ENCODE measurements at regions of chr14 and their contacts with region 1.

Region 1: DNA sequence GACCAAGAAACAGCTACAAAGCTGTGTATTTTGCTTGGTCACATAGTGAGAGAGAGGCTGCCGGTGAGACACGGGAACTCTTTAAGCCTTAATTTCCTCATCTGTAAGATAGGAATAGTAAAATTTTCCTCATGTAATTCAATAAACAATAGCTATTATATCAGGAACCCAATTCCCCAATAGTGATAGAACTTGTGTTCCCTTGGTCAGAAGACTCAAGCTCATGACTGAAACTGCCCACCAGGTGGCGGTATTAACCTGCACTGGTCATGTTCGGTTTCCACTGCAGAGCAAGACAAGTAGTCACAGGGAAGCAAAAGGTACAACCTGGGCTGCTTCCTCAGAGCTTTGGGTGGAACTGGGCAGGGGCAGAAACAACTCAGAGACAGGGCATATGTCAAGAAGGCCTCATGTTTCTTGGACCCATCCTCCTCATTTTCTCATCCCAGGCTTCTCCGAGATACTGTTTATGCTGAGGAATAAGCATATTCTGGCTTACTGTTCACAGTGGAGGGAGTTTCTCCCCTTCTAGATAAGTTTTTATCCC is 4.2 kb upstream of the AJUBA start:
- DNase-seq: peak; percentile 87
- H3K4me3 Mint-ChIP-seq: no peak overlapping the region
- H3K27ac Mint-ChIP-seq: no peak overlapping the region
- H3K4me1 Mint-ChIP-seq: peaks cover 6% of the 10 kb centered on the region
- H3K27me3 Mint-ChIP-seq: no peaks in the 10 kb centered on the region
- CTCF ChIP-seq: peak; percentile 75

Region 2: GRCh38 chr14:22200977-22201605 is 785.5 kb before region 1 on chr14:
- CTCF ChIA-PET with region 1: no interaction called
- POLR2A ChIA-PET with region 1: no interaction called
- intact Hi-C with region 1: no loop called
- DNase-seq: peak; percentile 57
- H3K4me3 Mint-ChIP-seq: no peak overlapping the region
- H3K27ac Mint-ChIP-seq: no peak overlapping the region
- H3K4me1 Mint-ChIP-seq: peaks cover 6% of the 10 kb centered on the region
- H3K27me3 Mint-ChIP-seq: peaks cover 12% of the 10 kb centered on the region
- CTCF ChIP-seq: peak; percentile 64

Region 3: GRCh38 chr14:22556990-22557623 is 429.5 kb before region 1 on chr14:
- CTCF ChIA-PET with region 1: interaction called, 6 read pairs
- POLR2A ChIA-PET with region 1: interaction called, 3 read pairs
- intact Hi-C with region 1: loop called (anchors 2 kb)
- DNase-seq: peak; percentile 78
- H3K4me3 Mint-ChIP-seq: peak overlapping the region; percentile 62
- H3K27ac Mint-ChIP-seq: peak overlapping the region; percentile 46
- H3K4me1 Mint-ChIP-seq: peaks cover 22% of the 10 kb centered on the region
- H3K27me3 Mint-ChIP-seq: no peaks in the 10 kb centered on the region
- CTCF ChIP-seq: peak; percentile 98

Region 4: GRCh38 chr14:22929104-22929847 is 57.3 kb before region 1 on chr14 and contains the start of gene PRMT5:
- CTCF ChIA-PET with region 1: interaction called, 25 read pairs
- POLR2A ChIA-PET with region 1: interaction called, 70 read pairs
- intact Hi-C with region 1: loop called (anchors 1 kb)
- DNase-seq: peak; percentile 99
- H3K4me3 Mint-ChIP-seq: no peak within 1 kb of the TSS
- H3K27ac Mint-ChIP-seq: no peak within 1 kb of the TSS
- H3K4me1 Mint-ChIP-seq: peaks cover 15% of the 10 kb centered on the region
- H3K27me3 Mint-ChIP-seq: no peaks in the 10 kb centered on the region
- CTCF ChIP-seq: no peak
- total RNA-seq, gene PRMT5: 175 and 201 TPM in 2 replicates

Region 5: DNA sequence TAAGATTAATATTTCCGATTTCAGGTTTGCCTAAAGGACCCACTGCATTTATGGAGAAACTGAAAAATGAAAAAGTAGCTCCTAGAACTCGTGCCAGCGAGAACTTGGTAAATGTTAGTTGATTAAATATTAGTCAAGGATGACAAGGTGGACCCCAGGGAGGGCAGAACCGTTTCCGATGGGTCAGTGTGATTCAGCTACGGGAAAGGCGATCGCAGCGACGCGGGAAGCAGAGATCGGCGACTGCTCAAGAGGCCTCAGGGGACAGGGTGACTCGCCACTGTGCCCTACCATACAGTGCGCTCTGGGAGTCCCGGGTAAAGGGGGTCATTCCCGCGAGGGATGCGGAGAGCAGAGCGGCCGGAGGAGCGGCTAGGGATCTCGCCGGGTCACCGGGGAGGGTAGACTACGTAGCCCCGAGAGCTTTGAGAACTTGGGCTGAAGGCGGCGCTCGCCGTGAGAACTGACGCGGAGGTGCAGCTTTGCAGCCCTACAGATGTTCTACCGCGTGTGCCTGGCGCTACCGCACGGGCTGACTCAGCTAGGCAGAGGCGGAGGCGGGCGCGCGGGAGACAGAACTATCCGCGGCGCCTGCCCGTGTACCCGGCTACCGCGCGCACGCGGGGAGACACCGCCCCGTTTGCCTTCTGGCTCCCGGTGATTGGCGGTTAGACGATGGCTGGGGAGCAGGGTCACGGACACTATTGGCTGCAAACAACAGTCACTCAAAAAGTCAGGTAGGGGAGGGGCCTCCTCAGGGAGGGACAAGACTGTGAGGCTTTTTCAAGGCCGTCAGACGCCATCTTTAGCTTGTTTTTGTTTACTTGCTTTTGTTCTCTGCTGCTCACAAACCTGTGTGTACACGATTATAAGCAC is 20.2 kb after region 1 on chr14:
- CTCF ChIA-PET with region 1: interaction called, 190 read pairs
- POLR2A ChIA-PET with region 1: interaction called, 91 read pairs
- intact Hi-C with region 1: no loop called
- DNase-seq: peak; percentile 98
- H3K4me3 Mint-ChIP-seq: peak overlapping the region; percentile 94
- H3K27ac Mint-ChIP-seq: peak overlapping the region; percentile 99
- H3K4me1 Mint-ChIP-seq: peaks cover 38% of the 10 kb centered on the region
- H3K27me3 Mint-ChIP-seq: no peaks in the 10 kb centered on the region
- CTCF ChIP-seq: peak; percentile 15

Region 6: GRCh38 chr14:23052182-23052623 is 65.6 kb after region 1 on chr14:
- CTCF ChIA-PET with region 1: interaction called, 620 read pairs
- POLR2A ChIA-PET with region 1: interaction called, 3 read pairs
- intact Hi-C with region 1: no loop called
- DNase-seq: no peak
- H3K4me3 Mint-ChIP-seq: no peak overlapping the region
- H3K27ac Mint-ChIP-seq: no peak overlapping the region
- H3K4me1 Mint-ChIP-seq: peaks cover 16% of the 10 kb centered on the region
- H3K27me3 Mint-ChIP-seq: no peaks in the 10 kb centered on the region
- CTCF ChIP-seq: no peak

Region 7: GRCh38 chr14:23095196-23096108 is 108.9 kb after region 1 on chr14 and contains the start of gene C14orf119:
- CTCF ChIA-PET with region 1: interaction called, 5 read pairs
- POLR2A ChIA-PET with region 1: interaction called, 39 read pairs
- intact Hi-C with region 1: no loop called
- DNase-seq: peak; percentile 100
- H3K4me3 Mint-ChIP-seq: no peak within 1 kb of the TSS
- H3K27ac Mint-ChIP-seq: no peak within 1 kb of the TSS
- H3K4me1 Mint-ChIP-seq: peaks cover 25% of the 10 kb centered on the region
- H3K27me3 Mint-ChIP-seq: no peaks in the 10 kb centered on the region
- CTCF ChIP-seq: no peak
- total RNA-seq, gene C14orf119: 39.6 and 54.8 TPM in 2 replicates